ENCODE measurements at regions of chr18 and their contacts with region 1.

Region 1: DNA sequence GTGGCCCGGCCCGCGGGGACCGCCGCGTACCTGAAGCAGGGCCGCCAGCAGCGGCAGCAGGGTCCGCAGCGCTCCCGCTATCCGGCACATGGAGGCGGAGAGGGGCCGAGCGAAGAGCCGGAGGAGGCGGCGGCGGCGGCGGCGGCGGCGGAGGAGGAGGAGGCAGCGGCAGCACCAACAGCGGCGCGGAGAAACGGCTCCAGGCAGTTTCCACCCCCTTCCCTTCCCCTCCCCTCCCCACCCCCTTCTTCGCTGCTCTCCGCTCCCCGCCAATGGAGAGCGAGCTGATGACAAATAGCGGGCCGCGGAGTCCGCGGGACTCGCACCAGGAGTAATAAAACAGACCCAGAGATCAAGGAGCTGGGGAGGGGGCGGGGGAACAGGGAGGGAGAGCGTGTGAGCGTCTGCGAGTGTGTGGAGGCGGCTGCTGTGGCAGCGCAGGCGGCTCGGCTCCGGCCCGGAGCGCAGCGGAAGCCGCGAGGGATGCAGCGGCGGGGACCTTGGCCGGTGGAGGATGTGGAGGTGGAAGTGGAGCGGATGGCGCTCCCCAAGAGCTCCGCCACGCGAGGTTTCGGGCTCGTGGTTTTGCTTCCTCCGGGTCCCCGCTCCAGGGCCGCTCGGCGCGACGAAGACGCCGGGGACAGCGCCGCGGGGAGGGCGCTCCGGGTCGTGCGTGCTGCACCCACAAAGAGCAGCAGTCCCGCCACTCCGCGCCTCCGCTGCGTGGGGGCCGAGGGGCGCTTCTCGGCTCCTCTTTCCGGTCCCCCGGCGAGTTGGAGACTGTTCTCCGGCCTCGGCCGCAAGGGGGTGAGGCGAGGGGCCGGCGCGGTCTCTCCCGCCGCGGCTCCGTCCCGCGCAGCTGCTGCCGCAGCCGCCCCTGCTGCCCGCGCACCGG is at the start of gene CDH2:
- DNase-seq: peak; percentile 79
- H3K4me3 ChIP-seq: peak within 1 kb of the TSS; percentile 60 to 99 (median 98)
- H3K27ac ChIP-seq: peak within 1 kb of the TSS; percentile 79
- H3K4me1 ChIP-seq: peaks cover 21% of the 10 kb centered on the region
- H3K27me3 ChIP-seq: no peaks in the 10 kb centered on the region
- CTCF ChIP-seq: peak; percentile 20 to 42
- POLR2A ChIP-seq: peak; percentile 64
- total RNA-seq, gene CDH2: 59.5 and 84.2 TPM in 2 replicates

Region 2: DNA sequence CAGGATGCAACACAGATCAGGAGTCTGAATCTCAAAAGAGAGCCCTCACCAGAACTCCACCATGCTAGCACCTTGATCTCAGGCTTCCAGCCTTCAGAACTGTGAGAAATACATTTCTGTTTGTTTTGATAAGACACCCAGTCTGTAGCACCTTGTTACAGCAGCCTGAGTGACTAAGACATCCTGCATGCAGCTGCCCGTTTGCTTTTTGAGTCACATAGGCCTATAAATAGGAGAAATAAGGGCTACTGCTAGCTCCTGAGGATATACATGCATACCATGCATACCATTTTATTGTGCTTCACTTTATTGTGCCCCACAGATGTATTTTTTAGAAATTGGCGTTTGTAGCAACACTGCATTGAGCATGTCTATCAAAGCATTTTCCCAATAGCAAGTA is 338.0 kb before region 1 on chr18:
- CTCF ChIA-PET with region 1: no interaction called
- POLR2A ChIA-PET with region 1: no interaction called
- dilution Hi-C with region 1: no loop called
- intact Hi-C with region 1: loop called (anchors 1 kb)
- DNase-seq: peak; percentile 89
- H3K4me3 ChIP-seq: no peak overlapping the region
- H3K27ac ChIP-seq: peak overlapping the region; percentile 88
- H3K4me1 ChIP-seq: peaks cover 34% of the 10 kb centered on the region
- H3K27me3 ChIP-seq: no peaks in the 10 kb centered on the region
- CTCF ChIP-seq: no peak
- POLR2A ChIP-seq: no peak

Region 3: DNA sequence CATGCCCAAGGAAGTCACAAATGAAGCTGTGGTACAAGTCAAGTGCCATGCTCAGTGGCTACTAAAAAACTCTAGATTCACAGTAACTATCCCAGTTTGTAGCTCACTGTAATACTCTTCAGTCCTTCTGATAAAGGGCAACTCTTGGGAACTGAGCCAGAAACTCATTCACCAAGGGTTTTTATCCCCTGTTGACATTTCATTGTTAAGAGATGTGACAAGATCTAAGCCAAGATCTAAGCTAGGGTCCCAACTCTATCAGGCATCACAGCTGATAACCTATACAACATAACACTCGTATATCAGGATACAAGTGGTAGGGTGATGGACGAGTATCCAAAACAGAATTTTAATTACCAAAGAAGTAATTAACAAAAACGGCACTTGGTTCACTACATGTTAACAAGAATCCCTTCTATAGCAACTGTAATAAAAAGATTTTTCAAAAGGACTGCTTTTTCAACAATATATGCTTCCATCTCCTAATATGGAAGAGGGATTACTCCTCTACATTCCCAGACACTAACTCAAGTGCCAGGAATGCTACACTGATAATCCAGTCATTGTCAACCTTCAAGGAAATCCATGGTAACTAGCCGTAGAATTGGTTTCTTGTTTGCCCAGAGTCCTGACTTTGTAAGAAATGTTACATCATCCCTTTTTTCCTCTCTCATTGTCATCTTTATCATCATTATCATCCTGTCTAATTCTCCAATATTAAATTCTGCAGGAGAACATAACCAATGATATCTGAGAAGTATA is 112.0 kb before region 1 on chr18:
- CTCF ChIA-PET with region 1: interaction called, 3 read pairs
- POLR2A ChIA-PET with region 1: no interaction called
- dilution Hi-C with region 1: no loop called
- intact Hi-C with region 1: loop called (anchors 2 kb)
- DNase-seq: peak; percentile 14
- H3K4me3 ChIP-seq: no peak overlapping the region
- H3K27ac ChIP-seq: peak overlapping the region; percentile 20
- H3K4me1 ChIP-seq: peaks cover 17% of the 10 kb centered on the region
- H3K27me3 ChIP-seq: no peaks in the 10 kb centered on the region
- CTCF ChIP-seq: no peak
- POLR2A ChIP-seq: no peak

Region 4: GRCh38 chr18:28086670-28087552 is 90.3 kb before region 1 on chr18:
- CTCF ChIA-PET with region 1: no interaction called
- POLR2A ChIA-PET with region 1: no interaction called
- dilution Hi-C with region 1: no loop called
- intact Hi-C with region 1: no loop called
- DNase-seq: peak; percentile 60
- H3K4me3 ChIP-seq: no peak overlapping the region
- H3K27ac ChIP-seq: no peak overlapping the region
- H3K4me1 ChIP-seq: peaks cover 5% of the 10 kb centered on the region
- H3K27me3 ChIP-seq: no peaks in the 10 kb centered on the region
- CTCF ChIP-seq: no peak
- POLR2A ChIP-seq: no peak

Region 5: GRCh38 chr18:28123401-28124030 is 53.7 kb before region 1 on chr18:
- CTCF ChIA-PET with region 1: no interaction called
- POLR2A ChIA-PET with region 1: no interaction called
- dilution Hi-C with region 1: no loop called
- intact Hi-C with region 1: no loop called
- DNase-seq: no peak
- H3K4me3 ChIP-seq: no peak overlapping the region
- H3K27ac ChIP-seq: no peak overlapping the region
- H3K4me1 ChIP-seq: no peaks in the 10 kb centered on the region
- H3K27me3 ChIP-seq: no peaks in the 10 kb centered on the region
- CTCF ChIP-seq: no peak
- POLR2A ChIP-seq: no peak

Region 6: DNA sequence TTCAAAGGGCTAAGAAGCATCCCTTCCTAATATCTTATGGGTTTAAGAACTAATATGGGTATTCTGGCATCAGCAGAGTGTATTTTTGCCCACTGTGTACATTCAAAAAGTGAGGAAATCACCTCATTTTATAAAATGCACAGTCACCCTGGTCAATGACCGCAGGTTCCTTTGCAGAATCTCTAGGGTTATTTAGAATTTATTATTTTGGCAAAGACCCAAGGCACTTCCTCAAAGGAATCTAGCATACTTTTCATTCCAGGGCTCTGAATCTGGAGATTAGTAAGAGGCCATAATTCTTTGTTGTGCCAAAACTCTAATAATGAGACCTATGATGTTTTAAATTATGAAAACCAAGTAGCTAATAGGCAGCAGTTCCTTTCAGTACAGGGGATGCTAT is 27.0 kb after region 1 on chr18:
- CTCF ChIA-PET with region 1: no interaction called
- POLR2A ChIA-PET with region 1: no interaction called
- dilution Hi-C with region 1: no loop called
- intact Hi-C with region 1: loop called (anchors 1 kb)
- DNase-seq: peak; percentile 83
- H3K4me3 ChIP-seq: no peak overlapping the region
- H3K27ac ChIP-seq: peak overlapping the region; percentile 93
- H3K4me1 ChIP-seq: peaks cover 16% of the 10 kb centered on the region
- H3K27me3 ChIP-seq: no peaks in the 10 kb centered on the region
- CTCF ChIP-seq: no peak
- POLR2A ChIP-seq: no peak

Region 7: GRCh38 chr18:28576941-28577340 is 399.8 kb after region 1 on chr18:
- CTCF ChIA-PET with region 1: no interaction called
- POLR2A ChIA-PET with region 1: no interaction called
- dilution Hi-C with region 1: no loop called
- intact Hi-C with region 1: no loop called
- DNase-seq: no peak
- H3K4me3 ChIP-seq: no peak overlapping the region
- H3K27ac ChIP-seq: no peak overlapping the region
- H3K4me1 ChIP-seq: no peaks in the 10 kb centered on the region
- H3K27me3 ChIP-seq: no peaks in the 10 kb centered on the region
- CTCF ChIP-seq: no peak
- POLR2A ChIP-seq: no peak